ENCODE measurements at regions of chr17 and their contacts with region 1.

Region 1: DNA sequence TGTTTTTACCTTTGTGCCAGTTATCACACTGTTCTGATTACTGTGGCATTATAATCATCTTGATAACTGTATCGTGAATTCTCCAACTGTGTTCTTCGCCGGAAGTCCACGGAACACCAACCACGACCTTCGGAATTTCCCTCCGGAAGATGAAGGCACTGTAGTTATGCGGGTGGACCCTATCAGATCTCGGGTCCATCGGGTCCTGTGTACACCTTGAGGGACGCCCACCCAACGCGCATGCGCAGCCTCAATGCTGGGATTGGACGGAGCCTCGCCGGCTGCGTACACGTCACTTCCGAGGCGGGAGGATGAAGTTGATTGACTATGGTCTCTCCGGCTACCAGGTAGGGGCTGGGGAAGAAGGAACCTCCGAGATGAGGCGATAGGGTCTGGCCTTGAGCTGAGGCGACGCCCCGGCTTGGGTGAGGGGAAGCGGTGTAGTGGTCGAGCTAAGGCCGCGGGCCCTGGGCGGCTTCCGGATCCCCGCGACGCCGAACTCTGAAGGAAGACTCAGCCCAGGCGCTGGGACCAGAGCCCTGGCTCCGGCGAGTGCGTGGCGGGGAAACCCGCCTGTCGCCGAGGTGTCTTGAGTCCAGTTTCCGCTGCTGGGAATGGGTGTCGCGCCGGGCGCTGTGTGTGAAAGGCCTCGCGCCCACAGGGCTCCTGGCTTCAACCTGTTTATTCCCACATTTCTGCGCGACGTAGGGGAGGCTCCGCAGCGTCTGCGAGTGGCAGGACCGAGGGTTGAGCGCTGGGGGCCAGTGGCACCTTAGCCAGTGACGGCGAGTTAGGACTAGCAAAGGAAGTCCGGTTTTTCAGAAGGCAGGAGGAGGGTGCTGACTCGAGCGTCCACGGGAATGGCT is at the start of gene DHRS7B:
- DNase-seq: peak; percentile 95
- ATAC-seq: peak; percentile 91
- H3K4me3 ChIP-seq: peak within 1 kb of the TSS; percentile 93
- H3K27ac ChIP-seq: peak within 1 kb of the TSS; percentile 72
- H3K4me1 ChIP-seq: no peaks in the 10 kb centered on the region; the same call in none of the 2 replicates
- H3K27me3 ChIP-seq: no peaks in the 10 kb centered on the region
- CTCF ChIP-seq: no peak
- EP300 ChIP-seq: no peak
- POLR2A ChIP-seq: peak; percentile 92
- RAD21 ChIP-seq: peak; percentile 32; the same call in 1 of the 2 replicates
- polyA plus RNA-seq, gene DHRS7B: 24.3 to 32.7 TPM

Region 2: GRCh38 chr17:21140911-21141310 is 14.0 kb after region 1 on chr17:
- CTCF ChIA-PET with region 1: interaction called, 22 read pairs
- POLR2A ChIA-PET with region 1: interaction called, 6 read pairs
- RAD21 ChIA-PET with region 1: interaction called, 14 read pairs
- SMC1A ChIA-PET with region 1: interaction called, 11 read pairs
- in situ Hi-C with region 1: no loop called
- intact Hi-C with region 1: no loop called
- DNase-seq: no peak
- ATAC-seq: peak; percentile 91
- H3K4me3 ChIP-seq: 0 out of 2 replicates have a peak overlapping the region, but pooled peaks have one; percentile 5
- H3K27ac ChIP-seq: peak overlapping the region; percentile 72
- H3K4me1 ChIP-seq: peaks cover 35% of the 10 kb centered on the region
- H3K27me3 ChIP-seq: no peaks in the 10 kb centered on the region
- CTCF ChIP-seq: no peak
- EP300 ChIP-seq: no peak
- POLR2A ChIP-seq: no peak
- RAD21 ChIP-seq: no peak

Region 3: DNA sequence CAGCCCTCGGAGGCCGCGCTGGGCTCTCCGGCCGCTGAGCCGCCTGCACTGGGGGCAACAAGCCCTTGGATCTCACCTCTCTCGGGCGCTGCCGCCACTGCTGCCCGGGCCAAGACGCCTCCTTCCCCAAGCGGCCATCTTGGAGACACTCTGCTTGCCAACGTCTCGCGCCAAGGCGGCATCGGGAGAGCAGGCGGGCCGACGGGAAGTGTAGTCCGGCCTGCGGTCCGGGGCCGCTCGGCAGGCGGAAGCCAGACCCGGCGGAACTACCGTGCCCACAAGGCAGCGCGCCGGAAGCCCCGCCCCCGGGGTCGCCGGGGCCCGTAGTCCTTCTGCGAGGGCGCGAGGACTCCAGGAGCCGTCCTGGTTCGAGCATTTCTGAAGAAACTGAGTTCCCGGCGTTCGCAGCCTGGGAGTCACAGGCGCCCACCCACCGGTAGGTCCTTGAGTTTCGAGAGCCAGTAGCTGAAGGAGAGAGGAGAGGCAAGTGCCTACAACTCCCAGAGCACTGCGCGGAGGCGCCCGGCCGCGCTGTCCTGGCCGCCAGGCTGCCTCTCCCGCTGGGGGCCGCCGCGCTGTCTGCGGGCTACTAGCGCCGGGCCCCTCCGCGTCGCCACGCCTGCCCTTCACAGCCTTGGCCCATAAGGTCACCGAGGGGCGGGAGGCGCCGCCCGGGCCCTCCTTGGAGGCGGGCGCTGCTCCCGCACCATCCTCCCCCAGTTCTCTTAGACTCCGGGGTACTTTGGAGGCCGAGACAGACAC is 87.3 kb after region 1 on chr17 and contains the start of gene TMEM11:
- CTCF ChIA-PET with region 1: interaction called, 13 read pairs
- POLR2A ChIA-PET with region 1: interaction called, 3 read pairs
- RAD21 ChIA-PET with region 1: interaction called, 4 read pairs
- SMC1A ChIA-PET with region 1: interaction called, 6 read pairs
- in situ Hi-C with region 1: no loop called
- intact Hi-C with region 1: loop called (anchors 2 kb)
- DNase-seq: peak; percentile 71
- ATAC-seq: peak; percentile 95
- H3K4me3 ChIP-seq: peak within 1 kb of the TSS; percentile 81
- H3K27ac ChIP-seq: peak within 1 kb of the TSS; percentile 90
- H3K4me1 ChIP-seq: peaks cover 9% of the 10 kb centered on the region; the same call in 1 of the 2 replicates
- H3K27me3 ChIP-seq: no peaks in the 10 kb centered on the region
- CTCF ChIP-seq: no peak
- EP300 ChIP-seq: no peak
- POLR2A ChIP-seq: peak; percentile 88
- RAD21 ChIP-seq: no peak
- polyA plus RNA-seq, gene TMEM11: 16.3 to 18.4 TPM

Region 4: DNA sequence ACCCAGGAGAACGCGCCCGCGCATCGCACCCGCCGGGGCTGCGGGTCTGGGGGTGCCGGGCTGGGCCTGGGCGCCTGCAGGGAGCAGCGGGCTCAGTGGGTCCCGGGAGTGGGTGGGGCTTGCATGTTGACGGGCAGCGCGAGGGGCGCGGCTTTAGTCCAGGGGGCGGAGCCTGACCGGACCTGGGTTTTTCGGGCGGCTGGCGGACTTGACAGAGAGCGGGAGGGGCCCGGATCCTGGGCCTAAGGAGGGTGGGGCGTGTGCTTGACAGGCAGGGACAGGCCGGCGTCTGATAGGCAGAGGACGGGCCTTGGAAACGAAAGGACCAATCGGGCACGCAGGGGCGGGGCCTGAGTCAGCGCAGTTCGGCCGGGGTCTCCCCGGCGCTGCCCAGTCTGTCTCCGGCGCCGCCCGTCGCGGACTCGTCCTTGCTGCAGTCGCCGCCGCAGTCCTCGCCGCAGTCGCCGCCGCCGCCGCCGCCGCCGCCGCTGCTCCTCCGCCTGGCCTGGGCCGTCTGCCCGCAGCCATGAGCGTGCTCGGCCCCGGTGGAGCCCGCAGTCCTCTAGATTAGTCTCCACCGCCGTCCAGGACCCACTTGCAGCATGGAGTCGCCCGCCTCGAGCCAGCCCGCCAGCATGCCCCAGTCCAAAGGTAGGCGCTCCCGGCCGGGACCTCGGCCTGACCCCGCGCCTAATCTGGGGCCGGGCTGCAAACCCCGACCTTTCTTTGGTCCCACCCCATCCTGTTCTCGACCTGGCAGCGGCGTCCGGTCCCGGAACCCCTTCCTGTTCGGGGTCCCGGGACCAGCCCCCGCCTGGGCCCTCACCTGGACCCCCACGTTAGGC is 157.7 kb after region 1 on chr17 and contains the start of gene MAP2K3:
- CTCF ChIA-PET with region 1: interaction called, 38 read pairs
- POLR2A ChIA-PET with region 1: interaction called, 3 read pairs
- RAD21 ChIA-PET with region 1: interaction called, 15 read pairs
- SMC1A ChIA-PET with region 1: interaction called, 12 read pairs
- in situ Hi-C with region 1: loop called (anchors 5 kb)
- intact Hi-C with region 1: loop called (anchors 5 kb)
- DNase-seq: peak; percentile 88
- ATAC-seq: peak; percentile 80
- H3K4me3 ChIP-seq: peak within 1 kb of the TSS; percentile 94
- H3K27ac ChIP-seq: peak within 1 kb of the TSS; percentile 68
- H3K4me1 ChIP-seq: peaks cover 31% of the 10 kb centered on the region
- H3K27me3 ChIP-seq: 0 out of 4 replicates have a peak, but pooled peaks cover 0 to 3% of the 10 kb centered on the region in 2 experiments
- CTCF ChIP-seq: no peak
- EP300 ChIP-seq: no peak
- POLR2A ChIP-seq: peak; percentile 86
- RAD21 ChIP-seq: no peak
- polyA plus RNA-seq, gene MAP2K3: 0.71 to 3.8 TPM

Region 5: GRCh38 chr17:21511363-21512198 is 384.7 kb after region 1 on chr17:
- CTCF ChIA-PET with region 1: interaction called, 47 read pairs
- POLR2A ChIA-PET with region 1: no interaction called
- RAD21 ChIA-PET with region 1: interaction called, 3 read pairs
- SMC1A ChIA-PET with region 1: interaction called, 4 read pairs
- in situ Hi-C with region 1: loop called (anchors 5 kb)
- intact Hi-C with region 1: loop called (anchors 5 kb)
- DNase-seq: no peak
- ATAC-seq: peak; percentile 95
- H3K4me3 ChIP-seq: no peak overlapping the region
- H3K27ac ChIP-seq: no peak overlapping the region
- H3K4me1 ChIP-seq: no peaks in the 10 kb centered on the region
- H3K27me3 ChIP-seq: peaks cover 3 to 11% of the 10 kb centered on the region in 2 experiments
- CTCF ChIP-seq: peak; percentile 54 to 72 (median 59)
- EP300 ChIP-seq: no peak
- POLR2A ChIP-seq: no peak
- RAD21 ChIP-seq: peak; percentile 56

Measured in GM12878 (cell line).